A673 (cell line): ENCODE measurements at regions of chr7 and their contacts with region 1.

Region 1: DNA sequence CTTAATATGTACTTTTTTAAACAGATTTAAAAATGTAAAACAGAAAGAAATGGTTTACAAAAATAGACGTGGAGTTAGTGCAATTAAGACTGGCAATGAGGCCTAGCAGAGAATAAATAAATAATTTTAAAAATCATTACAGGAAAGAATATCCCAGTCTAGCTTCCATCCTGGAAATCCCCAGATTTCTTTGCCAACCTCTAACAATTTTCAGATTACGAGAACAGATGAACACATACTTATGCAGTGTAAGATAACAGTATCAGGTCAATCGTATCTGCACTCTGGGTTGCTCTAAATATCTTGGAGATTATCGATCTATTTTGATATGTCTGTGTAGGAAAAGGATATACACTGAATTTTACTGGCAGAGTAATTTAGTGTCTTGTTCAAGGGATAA is 210.5 kb downstream of the SEMA3A start:
- DNase-seq: no peak
- H3K4me3 ChIP-seq: no peak overlapping the region
- H3K27ac ChIP-seq: no peak overlapping the region
- H3K4me1 ChIP-seq: peaks cover 5% of the 10 kb centered on the region
- H3K27me3 ChIP-seq: no peaks in the 10 kb centered on the region
- CTCF ChIP-seq: no peak

Region 2: DNA sequence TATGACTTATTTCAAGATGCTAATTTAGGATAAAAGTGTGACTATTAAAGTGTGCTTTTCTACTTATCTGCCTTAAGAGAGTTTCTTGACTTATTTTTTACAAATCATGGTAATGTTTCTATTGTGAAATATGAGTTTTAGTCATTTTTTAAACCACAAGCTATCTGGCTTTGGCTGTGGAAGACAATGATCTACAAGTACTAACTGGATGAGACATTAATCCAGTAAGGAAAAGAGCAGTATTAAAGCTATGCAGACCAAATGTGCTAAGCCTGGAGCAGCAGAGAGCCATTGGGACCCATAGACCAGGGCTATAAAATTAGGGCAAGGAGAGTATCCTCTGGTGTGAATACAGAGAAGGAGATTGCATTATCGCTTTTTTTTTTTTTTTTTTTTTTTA is 118.1 kb after region 1 on chr7:
- CTCF ChIA-PET with region 1: interaction called, 10 read pairs
- POLR2A ChIA-PET with region 1: no interaction called
- intact Hi-C with region 1: no loop called
- DNase-seq: no peak
- H3K4me3 ChIP-seq: no peak overlapping the region
- H3K27ac ChIP-seq: no peak overlapping the region
- H3K4me1 ChIP-seq: peaks cover 49% of the 10 kb centered on the region
- H3K27me3 ChIP-seq: no peaks in the 10 kb centered on the region
- CTCF ChIP-seq: no peak